AG04450 (cell line): ENCODE measurements at regions of chr20 and their contacts with region 1.

Region 1: DNA sequence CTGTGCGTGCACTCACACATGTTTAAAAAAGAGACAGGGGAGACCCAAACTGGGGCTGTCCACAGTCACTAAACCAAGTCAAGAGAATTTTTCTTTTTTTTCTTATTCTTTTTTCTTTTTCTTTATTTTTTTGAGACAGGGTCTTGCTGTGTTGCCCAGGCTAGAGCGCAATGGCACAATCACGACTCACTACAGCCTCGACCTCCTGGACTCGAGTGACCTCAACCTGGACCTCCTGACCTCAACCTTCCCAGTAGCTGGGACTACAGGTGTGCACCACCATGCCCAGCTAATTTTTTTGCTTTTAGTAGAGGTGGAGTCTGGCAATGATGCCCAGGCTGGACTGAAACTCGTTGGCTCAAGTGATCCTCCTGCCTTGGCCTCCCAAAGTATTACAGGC is 89.4 kb upstream of the NFATC2 start:
- DNase-seq: no peak
- H3K4me3 ChIP-seq: peak overlapping the region; percentile 32; the same call in 1 of the 2 replicates
- H3K27ac ChIP-seq: peak overlapping the region; percentile 99
- H3K27me3 ChIP-seq: no peaks in the 10 kb centered on the region
- CTCF ChIP-seq: no peak

Region 2: DNA sequence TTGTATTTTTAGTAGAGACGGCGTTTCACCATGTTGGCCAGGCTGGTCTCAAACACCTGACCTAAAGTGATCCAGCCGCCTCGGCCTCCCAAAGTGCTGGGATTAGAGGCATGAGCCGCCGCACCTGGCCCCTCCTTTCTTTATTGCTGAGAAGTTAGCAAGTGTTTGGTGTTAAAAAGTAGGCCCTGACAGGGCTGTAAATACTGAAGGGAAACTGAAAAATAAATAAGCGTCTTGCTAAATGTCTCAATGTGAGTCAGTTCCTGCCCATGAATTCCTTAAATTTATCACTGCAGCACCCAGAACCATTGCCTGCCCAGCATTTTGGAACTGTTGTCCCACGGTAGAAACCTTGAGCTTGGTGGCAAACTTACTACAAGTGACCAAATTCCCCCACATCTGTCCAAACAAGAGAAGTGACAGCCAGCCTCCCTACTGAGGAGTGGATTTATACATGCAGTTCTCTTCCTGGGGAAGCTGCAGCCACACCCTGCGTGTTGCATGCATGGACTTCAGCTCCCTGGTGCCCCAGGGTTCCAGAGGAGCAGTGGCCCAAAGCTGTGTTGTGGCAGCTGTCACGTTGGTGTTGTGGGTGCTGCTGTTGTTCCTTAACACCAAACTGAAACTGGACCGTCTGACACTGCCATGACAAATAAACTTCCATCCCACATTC is 110.9 kb after region 1 on chr20:
- CTCF ChIA-PET with region 1: interaction called, 11 read pairs
- POLR2A ChIA-PET with region 1: no interaction called
- DNase-seq: no peak
- H3K4me3 ChIP-seq: peak overlapping the region; percentile 34
- H3K27ac ChIP-seq: peak overlapping the region; percentile 73
- H3K27me3 ChIP-seq: no peaks in the 10 kb centered on the region
- CTCF ChIP-seq: no peak